ENCODE measurements at regions of chr9 and their contacts with region 1.

Region 1: GRCh38 chr9:100598641-100599145 is 20.8 kb downstream of the CAVIN4 start:
- DNase-seq: peak; percentile 87
- H3K4me3 ChIP-seq: peak overlapping the region; percentile 42
- H3K27ac ChIP-seq: no peak overlapping the region
- H3K4me1 ChIP-seq: peaks cover 3% of the 10 kb centered on the region
- H3K27me3 ChIP-seq: no peaks in the 10 kb centered on the region
- CTCF ChIP-seq: no peak

Region 2: DNA sequence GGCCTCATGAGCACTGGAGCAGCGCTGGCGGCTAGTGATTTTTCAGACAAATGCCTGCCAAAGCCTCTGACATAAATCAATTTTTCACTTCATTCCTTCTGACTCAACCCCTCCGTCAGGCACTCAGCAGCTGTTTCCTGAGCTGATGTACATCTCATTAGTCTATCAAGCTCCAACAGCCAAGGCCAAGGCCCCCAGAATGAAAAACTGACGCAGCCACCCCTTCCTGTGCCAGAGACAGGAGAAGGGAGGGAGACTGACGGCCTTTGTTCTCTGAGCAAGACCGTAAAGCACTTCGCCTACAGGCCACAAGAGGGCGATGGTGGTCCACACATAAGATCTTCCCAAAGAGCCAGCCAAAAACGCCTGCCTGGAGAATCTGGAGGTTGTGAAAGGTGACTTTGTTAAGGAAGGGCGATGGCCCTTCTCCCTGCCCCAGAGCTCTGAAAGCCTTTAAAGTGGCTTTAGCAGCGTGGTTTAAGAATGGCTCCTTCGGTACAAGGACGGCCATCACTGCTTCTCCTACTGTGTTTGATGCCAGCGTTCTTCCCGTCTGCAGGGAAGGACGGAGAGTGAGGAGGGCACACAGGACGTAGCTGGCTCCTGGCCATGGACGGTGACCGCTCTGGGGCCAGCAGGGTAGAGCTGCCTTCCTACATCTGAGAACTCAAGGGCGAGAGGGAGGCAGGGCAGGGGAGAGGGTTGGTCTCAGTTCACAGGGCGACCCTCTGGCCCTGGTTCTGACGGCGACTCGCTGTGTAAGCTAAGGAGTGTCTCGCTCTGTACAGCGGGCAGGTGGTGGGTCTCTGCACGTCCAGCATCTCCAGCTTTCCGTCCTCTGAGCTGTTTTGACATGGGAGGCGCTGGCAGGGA is 1414.0 kb before region 1 on chr9:
- CTCF ChIA-PET with region 1: interaction called, 12 read pairs
- POLR2A ChIA-PET with region 1: no interaction called
- intact Hi-C with region 1: loop called (anchors 5 kb)
- DNase-seq: peak; percentile 95
- H3K4me3 ChIP-seq: no peak overlapping the region
- H3K27ac ChIP-seq: no peak overlapping the region
- H3K4me1 ChIP-seq: peaks cover 15% of the 10 kb centered on the region
- H3K27me3 ChIP-seq: no peaks in the 10 kb centered on the region
- CTCF ChIP-seq: peak; percentile 94

Region 3: GRCh38 chr9:99931157-99931840 is 667.4 kb before region 1 on chr9:
- CTCF ChIA-PET with region 1: no interaction called
- POLR2A ChIA-PET with region 1: no interaction called
- intact Hi-C with region 1: no loop called
- DNase-seq: no peak
- H3K4me3 ChIP-seq: no peak overlapping the region
- H3K27ac ChIP-seq: no peak overlapping the region
- H3K4me1 ChIP-seq: no peaks in the 10 kb centered on the region
- H3K27me3 ChIP-seq: no peaks in the 10 kb centered on the region
- CTCF ChIP-seq: no peak

Region 4: DNA sequence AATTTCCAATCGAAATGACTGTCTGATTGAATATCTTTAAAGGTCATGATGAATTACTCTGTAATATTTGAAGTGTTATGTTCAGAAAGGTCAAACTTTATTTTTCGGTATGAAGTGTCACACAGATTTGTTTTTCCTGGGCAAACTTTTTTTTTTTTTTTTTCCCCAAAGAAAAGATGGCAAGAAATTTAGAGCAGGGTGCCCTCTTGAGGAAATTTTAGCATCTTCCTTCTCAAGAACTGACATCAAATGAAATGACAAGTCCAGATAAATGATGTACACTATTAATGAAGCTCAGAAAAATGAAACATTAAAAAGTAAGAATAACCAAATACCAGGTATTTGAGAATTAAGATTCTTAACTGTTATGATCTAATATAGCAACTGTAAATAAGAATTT is 376.0 kb before region 1 on chr9:
- CTCF ChIA-PET with region 1: no interaction called
- POLR2A ChIA-PET with region 1: no interaction called
- intact Hi-C with region 1: loop called (anchors 5 kb)
- DNase-seq: peak; percentile 69
- H3K4me3 ChIP-seq: no peak overlapping the region
- H3K27ac ChIP-seq: no peak overlapping the region
- H3K4me1 ChIP-seq: no peaks in the 10 kb centered on the region
- H3K27me3 ChIP-seq: no peaks in the 10 kb centered on the region
- CTCF ChIP-seq: peak; percentile 68

Region 5: DNA sequence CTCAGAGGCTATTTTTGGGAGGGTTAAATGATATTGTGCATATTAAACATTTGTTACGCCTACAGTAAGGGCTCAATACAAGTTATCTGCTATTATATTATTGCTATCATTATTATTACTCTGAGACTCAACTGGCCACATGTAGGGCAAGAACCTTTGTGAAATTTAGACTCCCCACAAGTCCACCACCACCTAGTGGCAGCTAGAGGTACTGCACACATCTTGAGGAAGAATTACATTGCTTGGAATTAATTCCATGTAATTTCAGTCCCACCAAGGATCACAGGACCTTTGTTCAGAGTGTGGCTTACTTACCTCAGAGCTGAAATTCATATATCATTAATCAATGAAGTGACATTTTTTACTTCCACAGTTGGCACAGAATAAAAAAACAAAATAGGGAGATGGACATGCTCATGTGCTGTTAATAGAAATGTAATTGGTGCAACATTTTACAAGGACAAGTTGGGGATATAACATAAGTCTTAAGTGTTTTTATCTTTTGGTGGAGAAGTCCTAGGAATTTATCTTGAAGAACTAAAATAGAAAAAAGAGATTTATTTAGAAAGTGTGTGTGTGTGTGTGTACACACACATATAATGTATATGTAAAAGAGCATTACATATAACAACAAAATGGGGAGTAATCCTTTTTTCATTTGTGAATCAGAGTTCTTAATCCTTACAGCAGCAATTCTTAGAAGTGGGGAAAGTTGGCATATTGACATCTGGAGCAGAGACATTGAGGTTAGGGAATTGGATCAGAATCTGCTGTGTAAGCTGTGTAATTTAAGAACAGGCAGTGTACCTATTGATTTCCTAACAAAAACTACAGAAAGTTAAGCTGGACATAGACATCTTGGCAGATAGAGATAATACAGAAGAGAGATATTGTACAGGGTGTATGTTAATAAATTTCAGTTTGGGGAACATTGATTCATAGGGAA is 160.6 kb before region 1 on chr9:
- CTCF ChIA-PET with region 1: no interaction called
- POLR2A ChIA-PET with region 1: no interaction called
- intact Hi-C with region 1: loop called (anchors 5 kb)
- DNase-seq: peak; percentile 85
- H3K4me3 ChIP-seq: no peak overlapping the region
- H3K27ac ChIP-seq: no peak overlapping the region
- H3K4me1 ChIP-seq: no peaks in the 10 kb centered on the region
- H3K27me3 ChIP-seq: no peaks in the 10 kb centered on the region
- CTCF ChIP-seq: peak; percentile 94

Region 6: DNA sequence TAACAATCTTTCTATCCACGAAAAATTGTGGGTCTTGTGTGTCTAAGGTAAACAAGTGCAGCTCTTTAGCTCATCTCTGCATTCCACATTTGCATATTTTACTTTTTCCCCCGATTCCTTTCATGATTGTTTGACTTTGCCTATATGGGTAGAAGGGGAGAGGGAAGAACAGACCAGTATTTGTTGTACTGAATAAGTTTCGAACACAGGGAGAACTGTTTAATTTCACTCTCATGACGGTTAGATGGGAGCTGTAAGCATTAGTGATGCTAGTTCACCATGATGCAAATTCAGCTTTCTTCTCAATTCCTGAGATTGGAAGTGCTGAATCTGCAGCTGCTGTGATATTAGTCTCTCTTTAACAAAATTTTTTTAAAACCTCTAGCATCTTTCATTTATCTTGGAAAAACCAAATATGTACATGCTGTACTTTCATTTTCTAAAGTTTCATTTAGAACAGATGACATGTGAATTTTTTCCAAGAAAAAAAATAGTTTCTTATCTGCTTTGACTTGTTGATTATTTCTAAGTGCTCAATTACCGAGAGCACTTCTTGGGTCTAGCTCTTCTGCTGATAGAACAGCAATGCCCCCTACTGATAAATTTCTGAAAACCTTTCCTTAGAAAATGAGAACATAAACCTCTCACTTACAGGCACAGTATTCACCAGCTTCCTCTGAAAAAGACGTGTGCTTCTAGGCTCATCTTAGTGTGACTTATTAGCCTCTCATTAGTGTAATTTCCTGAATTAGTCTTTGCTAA is 636.6 kb after region 1 on chr9:
- CTCF ChIA-PET with region 1: interaction called, 3 read pairs
- POLR2A ChIA-PET with region 1: no interaction called
- intact Hi-C with region 1: loop called (anchors 2 kb)
- DNase-seq: peak; percentile 49
- H3K4me3 ChIP-seq: no peak overlapping the region
- H3K27ac ChIP-seq: no peak overlapping the region
- H3K4me1 ChIP-seq: no peaks in the 10 kb centered on the region
- H3K27me3 ChIP-seq: no peaks in the 10 kb centered on the region
- CTCF ChIP-seq: peak; percentile 65

Region 7: GRCh38 chr9:101387871-101388506 is 789.3 kb after region 1 on chr9:
- CTCF ChIA-PET with region 1: no interaction called
- POLR2A ChIA-PET with region 1: no interaction called
- intact Hi-C with region 1: loop called (anchors 5 kb)
- DNase-seq: peak; percentile 70
- H3K4me3 ChIP-seq: no peak overlapping the region
- H3K27ac ChIP-seq: no peak overlapping the region
- H3K4me1 ChIP-seq: peaks cover 4% of the 10 kb centered on the region
- H3K27me3 ChIP-seq: no peaks in the 10 kb centered on the region
- CTCF ChIP-seq: peak; percentile 79

Measured in A673 (cell line).